HCT116 (cell line): ENCODE measurements at regions of chr6 and their contacts with region 1.

Region 1: DNA sequence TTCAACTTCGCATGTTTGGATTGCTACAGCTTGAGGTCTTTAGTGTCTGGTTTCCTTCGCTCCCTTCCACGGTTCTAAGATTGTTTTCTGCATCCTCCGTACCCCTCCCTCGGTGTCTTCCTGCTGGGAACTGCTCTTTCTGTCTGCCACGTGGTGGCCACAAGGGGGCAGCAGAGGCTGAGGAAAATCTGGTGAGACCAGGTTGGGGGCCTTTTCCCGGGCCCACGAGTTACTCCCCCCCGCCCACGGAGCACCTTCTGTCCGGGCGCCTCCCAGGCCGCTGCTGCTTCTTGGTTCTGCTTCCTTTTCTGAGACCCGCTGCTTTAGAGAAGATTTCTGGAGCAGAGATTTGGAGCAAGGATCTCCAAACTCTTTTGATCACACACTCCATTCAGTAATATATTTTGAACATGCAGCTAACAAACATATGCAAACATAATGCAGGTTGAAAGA is 21.1 kb upstream of the NOTCH4 start:
- DNase-seq: peak; percentile 56
- ATAC-seq: peak; percentile 95
- H3K4me3 ChIP-seq: peak overlapping the region; percentile 25 to 46
- H3K27ac ChIP-seq: no peak overlapping the region
- H3K4me1 ChIP-seq: peaks cover 0 to 14% of the 10 kb centered on the region in 2 experiments; a peak in 3 of 4 replicates
- H3K27me3 ChIP-seq: no peaks in the 10 kb centered on the region
- CTCF ChIP-seq: peak; percentile 87 to 96 (median 88)
- POLR2A ChIP-seq: no peak
- RAD21 ChIP-seq: peak; percentile 95

Region 2: DNA sequence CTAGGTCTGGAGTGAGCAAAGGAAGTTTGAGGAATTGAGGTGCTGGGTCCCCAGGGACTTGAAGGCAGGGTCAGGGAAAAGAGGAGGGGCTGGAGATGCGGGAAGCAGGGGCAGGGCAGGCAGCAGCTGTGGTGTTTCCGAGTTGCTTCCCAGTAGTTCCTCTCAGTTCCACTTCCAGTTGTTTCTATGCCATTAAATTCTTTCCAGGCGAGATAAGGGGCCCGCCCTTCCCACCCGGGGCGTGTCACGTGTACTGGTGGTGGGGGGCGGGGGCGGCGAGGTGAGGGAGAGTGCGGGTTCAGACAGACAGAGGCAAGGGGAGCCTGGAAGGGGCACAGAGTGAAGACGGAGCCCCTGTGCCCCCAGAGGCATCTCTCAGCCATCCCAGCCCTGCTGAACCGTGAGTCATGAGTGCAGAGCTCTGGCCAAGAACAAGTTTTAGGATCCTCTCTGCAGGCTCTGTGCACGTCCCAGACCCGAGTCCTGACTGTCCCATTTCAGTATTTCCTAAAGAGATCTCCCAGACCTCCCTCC is 136.8 kb before region 1 on chr6:
- CTCF ChIA-PET with region 1: no interaction called
- POLR2A ChIA-PET with region 1: no interaction called
- RAD21 ChIA-PET with region 1: no interaction called
- intact Hi-C with region 1: no loop called
- DNase-seq: no peak
- ATAC-seq: peak; percentile 52; the same call in 1 of the 2 replicates
- H3K4me3 ChIP-seq: no peak overlapping the region
- H3K27ac ChIP-seq: no peak overlapping the region
- H3K4me1 ChIP-seq: peaks cover 8 to 23% of the 10 kb centered on the region in 2 experiments; a peak in 3 of 4 replicates
- H3K27me3 ChIP-seq: no peaks in the 10 kb centered on the region
- CTCF ChIP-seq: no peak
- POLR2A ChIP-seq: no peak
- RAD21 ChIP-seq: no peak

Region 3: DNA sequence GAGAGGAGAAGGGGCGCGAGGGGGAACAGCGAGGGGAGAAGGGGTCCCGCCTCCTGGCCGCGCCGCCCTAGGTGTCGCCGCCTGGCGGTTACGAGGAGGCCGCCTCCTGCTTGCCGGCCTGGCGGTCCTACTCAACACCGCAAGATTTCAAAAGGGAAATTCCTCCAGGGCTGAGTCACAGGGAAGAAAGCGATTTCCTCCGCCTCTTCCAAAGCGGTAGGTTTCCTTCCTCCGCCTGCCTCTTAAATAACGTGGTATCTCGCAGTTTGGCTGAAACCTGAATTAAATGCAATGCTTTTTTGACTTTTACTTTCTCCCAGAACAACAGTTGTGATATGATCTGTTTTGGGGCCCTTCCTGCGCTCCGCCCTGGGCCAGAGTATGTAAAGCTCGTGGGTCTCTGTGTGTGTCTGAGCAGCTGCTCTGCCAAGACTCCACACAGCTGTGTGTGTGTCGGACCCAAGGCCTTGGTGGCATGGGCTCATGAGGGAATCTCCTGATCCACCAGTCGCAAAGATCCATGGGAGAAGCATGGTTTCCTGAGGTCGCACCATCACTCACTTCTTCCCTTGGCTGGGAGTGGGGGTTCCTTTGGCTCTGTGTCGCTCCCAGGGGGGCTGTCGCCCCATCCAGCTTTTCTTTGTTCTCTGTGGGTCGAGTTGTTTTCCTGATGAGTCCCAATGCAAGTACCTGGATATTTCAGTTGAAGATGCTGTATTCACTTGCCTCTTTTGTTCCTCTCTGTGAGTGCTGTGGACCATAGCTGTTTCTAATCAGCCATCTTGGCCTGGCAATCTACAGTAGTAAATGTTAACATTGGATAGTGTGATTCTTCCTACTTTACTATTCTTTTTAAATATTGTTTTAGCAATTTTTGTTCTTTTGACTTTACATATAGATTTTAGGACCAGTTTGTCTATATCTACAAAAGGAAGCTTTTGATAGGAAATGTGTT is 10.5 kb after region 1 on chr6:
- CTCF ChIA-PET with region 1: interaction called, 15 read pairs
- POLR2A ChIA-PET with region 1: no interaction called
- RAD21 ChIA-PET with region 1: interaction called in 1 of 2 experiments, 4 read pairs
- intact Hi-C with region 1: no loop called
- DNase-seq: peak; percentile 84
- ATAC-seq: peak; percentile 95
- H3K4me3 ChIP-seq: peak overlapping the region; percentile 33 to 58
- H3K27ac ChIP-seq: peak overlapping the region; percentile 61
- H3K4me1 ChIP-seq: peaks cover 8 to 29% of the 10 kb centered on the region in 2 experiments; a peak in 3 of 4 replicates
- H3K27me3 ChIP-seq: no peaks in the 10 kb centered on the region
- CTCF ChIP-seq: peak; percentile 36 to 63 (median 44); a peak in 5 of 6 replicates
- POLR2A ChIP-seq: peak; percentile 39
- RAD21 ChIP-seq: peak; percentile 48

Region 4: GRCh38 chr6:32298663-32299267 is 53.8 kb after region 1 on chr6:
- CTCF ChIA-PET with region 1: no interaction called
- POLR2A ChIA-PET with region 1: no interaction called
- RAD21 ChIA-PET with region 1: no interaction called
- intact Hi-C with region 1: no loop called
- DNase-seq: no peak
- ATAC-seq: no peak
- H3K4me3 ChIP-seq: no peak overlapping the region
- H3K27ac ChIP-seq: no peak overlapping the region
- H3K4me1 ChIP-seq: no peaks in the 10 kb centered on the region
- H3K27me3 ChIP-seq: no peaks in the 10 kb centered on the region
- CTCF ChIP-seq: no peak
- POLR2A ChIP-seq: no peak
- RAD21 ChIP-seq: no peak

Region 5: DNA sequence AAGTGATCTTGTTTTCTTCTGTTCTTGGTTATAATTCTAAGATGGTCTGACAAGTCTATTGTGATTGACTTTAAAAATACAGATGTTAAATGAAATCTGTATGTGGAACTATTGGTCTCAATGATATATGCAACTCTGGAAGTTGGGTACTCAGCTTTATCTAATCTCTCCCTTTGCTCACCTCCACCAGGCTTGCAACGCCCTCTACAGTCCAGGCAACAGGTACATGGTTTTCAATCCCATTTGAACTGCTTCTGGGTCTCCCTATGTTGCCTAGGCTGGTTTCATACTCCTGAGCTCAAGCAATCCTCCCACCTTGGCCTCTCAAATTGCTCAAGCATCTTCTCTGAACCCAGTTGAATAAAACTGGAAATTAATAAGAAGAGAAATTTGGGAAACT is 447.0 kb after region 1 on chr6:
- CTCF ChIA-PET with region 1: no interaction called
- POLR2A ChIA-PET with region 1: no interaction called
- RAD21 ChIA-PET with region 1: no interaction called
- intact Hi-C with region 1: loop called (anchors 1 kb)
- DNase-seq: peak; percentile 42
- ATAC-seq: peak; percentile 91
- H3K4me3 ChIP-seq: no peak overlapping the region
- H3K27ac ChIP-seq: no peak overlapping the region
- H3K4me1 ChIP-seq: no peaks in the 10 kb centered on the region
- H3K27me3 ChIP-seq: no peaks in the 10 kb centered on the region
- CTCF ChIP-seq: peak; percentile 65 to 80 (median 66); a peak in 5 of 6 replicates
- POLR2A ChIP-seq: no peak
- RAD21 ChIP-seq: peak; percentile 87

Region 6: GRCh38 chr6:32785781-32786533 is 541.0 kb after region 1 on chr6:
- CTCF ChIA-PET with region 1: interaction called, 11 read pairs
- POLR2A ChIA-PET with region 1: no interaction called
- RAD21 ChIA-PET with region 1: no interaction called
- intact Hi-C with region 1: no loop called
- DNase-seq: peak; percentile 64
- ATAC-seq: peak; percentile 99
- H3K4me3 ChIP-seq: no peak overlapping the region
- H3K27ac ChIP-seq: no peak overlapping the region
- H3K4me1 ChIP-seq: peaks cover 0 to 8% of the 10 kb centered on the region in 2 experiments; a peak in 2 of 4 replicates
- H3K27me3 ChIP-seq: no peaks in the 10 kb centered on the region
- CTCF ChIP-seq: peak; percentile 65 to 72 (median 69)
- POLR2A ChIP-seq: no peak
- RAD21 ChIP-seq: peak; percentile 87